ENCODE measurements at regions of chr4 and their contacts with region 1.

Region 1: DNA sequence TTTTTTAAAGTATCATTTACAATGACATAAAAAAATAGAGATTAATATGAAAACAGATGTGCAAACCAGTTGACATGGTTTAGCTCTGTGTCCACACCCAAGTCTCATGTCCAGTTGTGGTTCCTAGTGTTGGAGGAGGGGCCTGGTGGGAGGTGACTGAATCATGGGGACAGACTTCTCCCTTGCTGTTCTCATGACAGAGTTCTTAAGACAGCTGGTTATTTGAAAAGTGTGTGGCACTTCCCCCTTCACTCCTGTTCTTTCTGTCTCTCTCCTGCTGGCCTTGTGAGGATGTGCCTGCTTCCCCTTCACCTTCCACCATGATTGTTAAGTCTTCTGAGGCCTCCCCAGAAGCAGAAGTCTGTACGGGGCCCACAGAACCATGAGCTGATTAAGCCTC is 23.8 kb downstream of the CNOT6L start:
- DNase-seq: no peak
- ATAC-seq: no peak
- H3K4me3 ChIP-seq: no peak overlapping the region
- H3K4me3 Mint-ChIP-seq: peak overlapping the region in 1 of 3 donors; percentile 71
- H3K27ac ChIP-seq: no peak overlapping the region
- H3K27ac Mint-ChIP-seq: peak overlapping the region in 1 of 2 donors; percentile 53
- H3K4me1 ChIP-seq: peaks cover 32 to 58% of the 10 kb centered on the region in 2 experiments
- H3K4me1 Mint-ChIP-seq: peaks cover 80 to 87% (median 84%) of the 10 kb centered on the region in 3 donors
- H3K27me3 ChIP-seq: no peaks in the 10 kb centered on the region
- H3K27me3 Mint-ChIP-seq: no peaks in the 10 kb centered on the region

Region 2: DNA sequence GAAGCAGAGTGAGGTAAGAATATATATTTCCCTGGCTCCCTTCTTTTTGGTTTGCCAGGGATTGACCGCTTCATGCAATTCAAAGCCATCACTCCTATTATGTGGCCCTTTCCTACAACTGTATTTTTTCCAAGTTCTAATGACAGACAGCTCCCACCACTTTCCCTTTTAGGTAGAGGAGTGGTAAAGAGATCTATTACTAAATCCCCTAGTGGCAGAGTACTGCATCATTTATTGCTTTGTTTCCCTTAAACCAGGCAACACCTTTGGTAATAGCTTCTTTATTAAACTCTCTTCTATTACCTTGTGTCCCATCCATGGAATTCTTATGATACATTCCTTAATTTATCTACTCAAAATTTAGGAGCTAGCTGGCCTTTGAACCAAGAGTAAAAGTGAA is 66.9 kb before region 1 on chr4:
- CTCF ChIA-PET with region 1: no interaction called
- POLR2A ChIA-PET with region 1: interaction called in 1 of 2 experiments, 15 read pairs
- DNase-seq: no peak
- ATAC-seq: no peak
- H3K4me3 ChIP-seq: no peak overlapping the region
- H3K4me3 Mint-ChIP-seq: no peak overlapping the region
- H3K27ac ChIP-seq: no peak overlapping the region
- H3K27ac Mint-ChIP-seq: peak overlapping the region in 1 of 2 donors; percentile 55
- H3K4me1 ChIP-seq: no peaks in the 10 kb centered on the region
- H3K4me1 Mint-ChIP-seq: peaks cover 23 to 36% (median 35%) of the 10 kb centered on the region in 3 donors
- H3K27me3 ChIP-seq: no peaks in the 10 kb centered on the region
- H3K27me3 Mint-ChIP-seq: no peaks in the 10 kb centered on the region